MCF 10A (cell line): ENCODE measurements at regions of chr15 and their contacts with region 1.

Region 1: DNA sequence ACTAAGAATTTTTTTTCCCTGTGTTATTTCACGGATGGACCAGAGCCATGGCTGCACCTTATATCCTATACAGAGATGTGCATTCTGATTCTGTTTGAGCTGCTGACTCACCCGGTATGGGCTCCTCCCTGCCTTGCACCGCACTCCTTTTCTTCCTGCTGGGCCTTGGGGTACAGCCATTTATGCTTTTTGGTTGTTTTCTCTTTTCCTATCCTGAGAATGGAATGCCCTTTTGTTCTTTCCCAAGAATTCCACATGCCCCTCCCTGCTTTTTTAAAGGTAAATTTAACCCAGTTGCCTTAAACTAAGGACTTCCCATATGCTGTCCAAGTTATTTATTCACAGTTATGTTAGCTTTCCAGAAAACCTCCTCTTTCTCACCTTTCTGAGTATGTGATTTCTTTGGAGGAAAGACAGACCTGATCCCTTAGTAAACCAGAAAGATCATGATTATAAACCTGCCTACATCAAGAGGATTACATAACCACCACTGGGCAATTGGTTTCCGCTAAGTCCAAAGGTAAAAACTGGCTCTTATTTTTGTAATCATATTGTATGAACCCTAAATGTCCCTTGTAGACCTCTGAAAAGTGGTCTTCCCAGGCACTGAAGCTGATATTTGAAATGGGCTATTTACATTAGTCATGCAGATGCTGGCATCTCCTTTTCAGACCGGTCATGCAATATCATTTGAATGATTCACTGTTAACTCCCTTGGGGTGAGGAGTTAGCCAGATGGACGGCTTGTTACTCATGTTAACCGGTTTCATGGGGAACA is 45.5 kb downstream of the TMOD3 start:
- DNase-seq: peak; percentile 98
- H3K4me3 Mint-ChIP-seq: peak overlapping the region; percentile 68
- H3K27ac Mint-ChIP-seq: peak overlapping the region; percentile 97
- H3K4me1 Mint-ChIP-seq: peaks cover 47% of the 10 kb centered on the region
- H3K27me3 Mint-ChIP-seq: no peaks in the 10 kb centered on the region
- CTCF ChIP-seq: no peak

Region 2: GRCh38 chr15:51842852-51843737 is 31.8 kb before region 1 on chr15:
- CTCF ChIA-PET with region 1: interaction called, 4 read pairs
- POLR2A ChIA-PET with region 1: interaction called, 26 read pairs
- intact Hi-C with region 1: no loop called
- DNase-seq: peak; percentile 75
- H3K4me3 Mint-ChIP-seq: peak overlapping the region; percentile 9
- H3K27ac Mint-ChIP-seq: peak overlapping the region; percentile 69
- H3K4me1 Mint-ChIP-seq: peaks cover 54% of the 10 kb centered on the region
- H3K27me3 Mint-ChIP-seq: no peaks in the 10 kb centered on the region
- CTCF ChIP-seq: no peak

Region 3: DNA sequence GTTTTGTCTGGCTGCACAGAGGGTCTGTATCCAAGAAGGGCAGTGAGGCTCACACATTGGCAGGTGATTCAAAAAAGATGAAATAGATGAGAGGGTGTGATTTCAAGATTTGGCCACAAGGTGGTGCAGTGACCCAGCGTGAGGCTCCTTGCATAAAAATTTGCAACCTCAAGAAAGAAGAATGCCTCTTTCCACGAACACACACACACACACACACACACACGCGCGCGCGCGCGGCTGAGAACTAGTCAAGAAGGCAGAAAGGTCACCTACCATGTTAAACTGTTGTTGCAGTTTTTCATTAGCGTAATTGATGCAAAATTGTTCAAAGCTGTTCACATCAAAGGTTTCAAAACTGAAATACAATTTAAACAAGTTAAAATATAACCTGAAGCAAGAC is 381.4 kb after region 1 on chr15:
- CTCF ChIA-PET with region 1: no interaction called
- POLR2A ChIA-PET with region 1: no interaction called
- intact Hi-C with region 1: no loop called
- DNase-seq: peak; percentile 73
- H3K4me3 Mint-ChIP-seq: no peak overlapping the region
- H3K27ac Mint-ChIP-seq: no peak overlapping the region
- H3K4me1 Mint-ChIP-seq: peaks cover 39% of the 10 kb centered on the region
- H3K27me3 Mint-ChIP-seq: no peaks in the 10 kb centered on the region
- CTCF ChIP-seq: peak; percentile 78